Kidney (tissue), 22 donors: ENCODE measurements at regions of chr7 and their contacts with region 1.

Region 1: DNA sequence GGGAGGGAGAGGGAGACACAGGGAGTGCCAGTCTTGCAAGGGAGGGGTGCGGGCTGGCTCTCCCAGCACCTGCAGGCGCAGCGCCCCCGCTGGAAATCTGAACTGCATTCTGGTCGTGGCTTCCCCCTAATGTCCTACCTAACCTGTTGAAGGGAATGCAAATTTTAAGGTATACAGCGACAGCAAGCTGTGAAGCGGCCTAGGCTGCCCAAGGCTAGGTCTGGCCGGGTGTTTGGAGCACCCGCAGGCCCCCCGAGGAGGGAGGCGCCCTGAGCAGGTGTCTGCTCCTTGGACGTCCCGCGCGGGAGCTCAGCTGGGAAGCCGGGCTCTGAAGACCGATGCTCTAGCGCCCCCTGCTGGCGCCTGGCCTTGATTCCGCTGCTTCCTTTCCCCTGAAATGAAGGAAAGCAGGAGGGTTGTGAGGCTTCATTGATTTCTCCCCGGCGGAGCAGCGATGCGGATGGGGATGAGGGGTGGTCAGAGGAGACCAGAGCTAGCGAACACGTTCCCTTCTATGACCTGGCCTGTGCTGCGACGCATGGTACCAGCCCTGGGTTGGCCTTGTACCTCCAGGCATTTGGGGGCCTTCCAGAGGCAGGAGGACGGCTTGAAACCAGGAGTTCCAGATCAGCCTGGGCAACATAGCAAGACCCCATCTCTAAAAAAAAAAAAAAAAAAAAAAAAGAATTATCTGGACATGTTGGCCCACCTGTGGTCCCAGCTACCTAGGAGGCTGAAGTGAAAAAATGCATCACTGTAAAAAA is 601.3 kb downstream of the GALNT17 start:
- DNase-seq: peak; percentile 91 to 94 (median 93)
- H3K4me3 ChIP-seq: no peak overlapping the region
- H3K27ac ChIP-seq: no peak overlapping the region
- H3K4me1 ChIP-seq: no peaks in the 10 kb centered on the region
- H3K27me3 ChIP-seq: no peaks in the 10 kb centered on the region
- CTCF ChIP-seq: peak; percentile 92

Region 2: GRCh38 chr7:70856866-70857630 is 876.2 kb before region 1 on chr7:
- intact Hi-C with region 1: loop called (anchors 5 kb)
- DNase-seq: peak; percentile 84 to 87 (median 87)
- H3K4me3 ChIP-seq: no peak overlapping the region
- H3K27ac ChIP-seq: no peak overlapping the region
- H3K4me1 ChIP-seq: no peaks in the 10 kb centered on the region
- H3K27me3 ChIP-seq: no peaks in the 10 kb centered on the region
- CTCF ChIP-seq: peak; percentile 77

Region 3: GRCh38 chr7:71486856-71487628 is 246.2 kb before region 1 on chr7:
- intact Hi-C with region 1: no loop called
- DNase-seq: no peak
- H3K4me3 ChIP-seq: no peak overlapping the region
- H3K27ac ChIP-seq: no peak overlapping the region
- H3K4me1 ChIP-seq: no peaks in the 10 kb centered on the region
- H3K27me3 ChIP-seq: no peaks in the 10 kb centered on the region
- CTCF ChIP-seq: no peak

Region 4: GRCh38 chr7:72028267-72028666 is 295.0 kb after region 1 on chr7:
- intact Hi-C with region 1: no loop called
- DNase-seq: no peak
- H3K4me3 ChIP-seq: no peak overlapping the region
- H3K27ac ChIP-seq: no peak overlapping the region
- H3K4me1 ChIP-seq: no peaks in the 10 kb centered on the region
- H3K27me3 ChIP-seq: no peaks in the 10 kb centered on the region
- CTCF ChIP-seq: no peak